GM12878 (cell line): ENCODE measurements at regions of chr14 and their contacts with region 1.

Region 1: GRCh38 chr14:24195191-24196070 is at the start of gene TM9SF1:
- DNase-seq: peak; percentile 52
- ATAC-seq: peak; percentile 93
- H3K4me3 ChIP-seq: peak within 1 kb of the TSS; percentile 68
- H3K27ac ChIP-seq: peak within 1 kb of the TSS; percentile 96
- H3K4me1 ChIP-seq: peaks cover 15% of the 10 kb centered on the region
- H3K27me3 ChIP-seq: no peaks in the 10 kb centered on the region
- CTCF ChIP-seq: no peak
- EP300 ChIP-seq: no peak
- POLR2A ChIP-seq: peak; percentile 95
- RAD21 ChIP-seq: no peak
- polyA plus RNA-seq, gene TM9SF1: 7.2 to 9.8 TPM

Region 2: DNA sequence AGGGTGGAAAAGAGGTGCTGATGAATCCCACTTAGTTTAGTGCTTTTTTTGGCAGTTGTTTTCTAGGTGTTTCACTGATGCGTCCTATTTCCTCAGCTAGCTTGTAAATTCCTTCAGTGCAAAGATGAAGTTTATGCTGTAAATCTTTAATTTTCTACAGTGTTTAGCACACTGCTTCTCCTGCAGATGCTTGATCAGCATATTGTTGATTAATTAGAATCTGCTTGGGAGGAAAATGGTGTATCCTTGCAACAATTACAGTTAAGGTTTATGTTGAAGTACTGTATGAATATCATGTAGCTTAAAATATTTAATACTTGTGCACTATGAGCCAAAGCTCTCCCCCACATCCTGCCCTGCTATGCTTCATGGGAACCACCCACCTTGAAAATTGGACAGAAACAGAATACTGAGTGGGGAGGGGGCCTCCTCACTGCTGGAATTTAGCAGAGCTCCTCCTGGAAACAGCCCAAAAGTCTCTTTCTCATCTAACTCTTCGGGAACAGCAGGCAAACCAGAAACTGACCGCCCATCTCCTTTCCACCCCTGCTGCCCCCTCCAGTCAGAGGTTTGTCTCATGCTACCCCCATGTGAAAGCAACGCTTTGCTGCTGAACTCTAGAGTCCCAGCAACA is 262.2 kb before region 1 on chr14:
- CTCF ChIA-PET with region 1: no interaction called
- POLR2A ChIA-PET with region 1: no interaction called
- RAD21 ChIA-PET with region 1: no interaction called
- SMC1A ChIA-PET with region 1: no interaction called
- in situ Hi-C with region 1: no loop called
- intact Hi-C with region 1: no loop called
- DNase-seq: no peak
- ATAC-seq: no peak
- H3K4me3 ChIP-seq: no peak overlapping the region
- H3K27ac ChIP-seq: no peak overlapping the region
- H3K4me1 ChIP-seq: no peaks in the 10 kb centered on the region
- H3K27me3 ChIP-seq: no peaks in the 10 kb centered on the region
- CTCF ChIP-seq: no peak
- EP300 ChIP-seq: no peak
- POLR2A ChIP-seq: no peak
- RAD21 ChIP-seq: no peak

Region 3: DNA sequence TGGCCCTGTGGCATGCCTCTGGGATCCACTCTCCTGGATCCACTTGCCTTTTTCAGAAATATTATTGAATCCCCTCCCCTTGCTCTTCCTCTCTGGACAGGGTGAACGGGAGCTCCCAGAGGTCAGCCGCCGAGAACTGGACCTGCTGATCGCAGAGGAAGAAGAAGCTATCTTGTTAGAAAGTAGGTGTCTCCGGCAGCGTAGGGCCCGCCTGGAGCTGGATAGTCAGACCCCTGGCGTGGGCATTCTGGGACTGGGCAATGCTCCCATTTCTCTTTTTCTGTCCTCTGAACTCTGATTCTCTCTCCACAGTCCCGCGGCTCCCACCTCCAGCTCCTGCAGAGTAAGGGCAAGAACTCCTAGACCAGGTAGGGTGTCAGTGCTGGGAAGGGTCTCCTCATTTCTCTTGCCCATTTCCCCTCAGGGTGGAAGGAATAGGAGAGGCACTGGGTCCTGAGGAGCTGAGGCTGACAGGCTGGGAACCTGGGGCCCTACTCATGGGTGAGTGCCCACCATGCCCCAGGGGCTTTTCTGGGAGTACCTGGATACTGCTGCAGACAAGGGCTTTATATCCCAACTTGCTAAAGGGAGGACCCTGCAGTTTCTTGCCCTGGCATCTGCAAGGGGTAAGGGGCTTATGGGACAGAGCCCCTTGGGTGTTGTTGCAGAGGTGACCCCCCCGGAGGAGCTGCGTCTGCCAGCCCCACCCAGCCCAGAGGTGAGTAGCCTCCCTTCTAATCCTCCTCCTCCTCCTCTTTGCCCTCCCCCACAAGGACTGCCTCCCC is 18.2 kb before region 1 on chr14:
- CTCF ChIA-PET with region 1: no interaction called
- POLR2A ChIA-PET with region 1: no interaction called
- RAD21 ChIA-PET with region 1: no interaction called
- SMC1A ChIA-PET with region 1: no interaction called
- in situ Hi-C with region 1: no loop called
- intact Hi-C with region 1: no loop called
- DNase-seq: no peak
- ATAC-seq: no peak
- H3K4me3 ChIP-seq: no peak overlapping the region
- H3K27ac ChIP-seq: no peak overlapping the region
- H3K4me1 ChIP-seq: no peaks in the 10 kb centered on the region
- H3K27me3 ChIP-seq: no peaks in the 10 kb centered on the region
- CTCF ChIP-seq: no peak
- EP300 ChIP-seq: no peak
- POLR2A ChIP-seq: no peak; the same call in 1 of the 2 replicates
- RAD21 ChIP-seq: no peak

Region 4: DNA sequence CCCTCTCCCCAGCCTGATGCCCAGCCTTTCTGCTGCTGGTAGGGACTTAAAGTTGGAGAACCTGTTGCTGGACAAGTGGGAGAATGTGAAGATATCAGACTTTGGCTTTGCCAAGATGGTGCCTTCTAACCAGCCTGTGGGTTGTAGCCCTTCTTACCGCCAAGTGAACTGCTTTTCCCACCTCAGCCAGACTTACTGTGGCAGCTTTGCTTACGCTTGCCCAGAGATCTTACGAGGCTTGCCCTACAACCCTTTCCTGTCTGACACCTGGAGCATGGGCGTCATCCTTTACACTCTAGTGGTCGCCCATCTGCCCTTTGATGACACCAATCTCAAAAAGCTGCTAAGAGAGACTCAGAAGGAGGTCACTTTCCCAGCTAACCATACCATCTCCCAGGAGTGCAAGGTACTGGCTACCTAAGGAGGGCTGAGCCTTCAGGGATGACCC is 11.7 kb after region 1 on chr14:
- CTCF ChIA-PET with region 1: interaction called, 4 read pairs
- POLR2A ChIA-PET with region 1: interaction called, 50 read pairs
- RAD21 ChIA-PET with region 1: interaction called, 10 read pairs
- SMC1A ChIA-PET with region 1: interaction called, 3 read pairs
- in situ Hi-C with region 1: no loop called
- intact Hi-C with region 1: no loop called
- DNase-seq: no peak
- ATAC-seq: no peak; the same call in 2 of the 3 replicates
- H3K4me3 ChIP-seq: no peak overlapping the region
- H3K27ac ChIP-seq: no peak overlapping the region
- H3K4me1 ChIP-seq: peaks cover 3% of the 10 kb centered on the region
- H3K27me3 ChIP-seq: no peaks in the 10 kb centered on the region
- CTCF ChIP-seq: no peak
- EP300 ChIP-seq: no peak
- POLR2A ChIP-seq: no peak
- RAD21 ChIP-seq: no peak